GM18951 (cell line): ENCODE measurements at regions of chr1 and their contacts with region 1.

Region 1: DNA sequence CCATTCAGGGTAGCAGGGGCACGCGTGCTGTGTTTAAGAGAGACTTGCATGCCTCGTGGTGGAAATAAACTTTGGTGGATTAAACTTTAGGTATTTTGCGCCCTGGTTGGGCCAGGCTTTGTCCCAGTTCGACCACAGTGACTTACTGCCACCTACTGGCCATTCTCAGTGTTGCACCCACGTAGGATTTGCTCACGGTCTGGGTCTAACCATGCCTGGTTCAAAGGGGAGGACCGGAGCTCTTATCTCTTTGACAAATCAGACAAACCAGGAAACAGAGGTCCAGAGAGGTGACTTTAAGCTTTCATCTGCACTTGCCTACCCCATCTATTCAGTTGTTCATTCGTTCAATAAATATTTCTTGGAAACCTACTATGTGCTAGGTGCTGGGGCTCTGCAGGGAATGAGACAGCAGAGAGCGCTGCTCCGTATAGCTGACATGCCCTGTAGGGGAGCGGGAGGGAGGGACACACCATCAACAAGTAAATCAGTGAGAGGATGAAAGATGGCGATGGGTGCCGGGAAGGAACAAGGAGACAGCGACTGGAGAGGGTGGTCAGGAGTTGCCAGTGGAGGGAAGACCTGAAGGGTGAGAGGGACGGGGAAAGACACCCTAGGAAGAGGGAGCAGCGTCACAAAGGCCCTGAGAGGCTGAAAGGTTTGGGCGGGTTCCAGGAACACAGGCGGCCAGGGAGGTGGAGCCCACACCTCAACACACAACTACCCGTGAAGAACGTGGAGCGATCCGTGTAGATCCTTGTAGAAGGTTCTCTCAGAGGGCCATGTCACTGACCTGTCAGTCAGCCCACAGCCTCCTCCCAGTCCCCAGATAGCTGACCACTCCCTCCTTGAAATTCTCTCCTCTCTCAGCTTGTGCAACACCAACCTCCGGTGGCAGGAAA is 27.2 kb upstream of the TINAGL1 start:
- POLR2A ChIP-seq: peak; percentile 43

Region 2: GRCh38 chr1:31422505-31423319 is 126.4 kb before region 1 on chr1:
- in situ Hi-C with region 1: loop called (anchors 10 kb)
- POLR2A ChIP-seq: no peak